Heart left ventricle (tissue), 16 donors: ENCODE measurements at regions of chr6 and their contacts with region 1.

Region 1: DNA sequence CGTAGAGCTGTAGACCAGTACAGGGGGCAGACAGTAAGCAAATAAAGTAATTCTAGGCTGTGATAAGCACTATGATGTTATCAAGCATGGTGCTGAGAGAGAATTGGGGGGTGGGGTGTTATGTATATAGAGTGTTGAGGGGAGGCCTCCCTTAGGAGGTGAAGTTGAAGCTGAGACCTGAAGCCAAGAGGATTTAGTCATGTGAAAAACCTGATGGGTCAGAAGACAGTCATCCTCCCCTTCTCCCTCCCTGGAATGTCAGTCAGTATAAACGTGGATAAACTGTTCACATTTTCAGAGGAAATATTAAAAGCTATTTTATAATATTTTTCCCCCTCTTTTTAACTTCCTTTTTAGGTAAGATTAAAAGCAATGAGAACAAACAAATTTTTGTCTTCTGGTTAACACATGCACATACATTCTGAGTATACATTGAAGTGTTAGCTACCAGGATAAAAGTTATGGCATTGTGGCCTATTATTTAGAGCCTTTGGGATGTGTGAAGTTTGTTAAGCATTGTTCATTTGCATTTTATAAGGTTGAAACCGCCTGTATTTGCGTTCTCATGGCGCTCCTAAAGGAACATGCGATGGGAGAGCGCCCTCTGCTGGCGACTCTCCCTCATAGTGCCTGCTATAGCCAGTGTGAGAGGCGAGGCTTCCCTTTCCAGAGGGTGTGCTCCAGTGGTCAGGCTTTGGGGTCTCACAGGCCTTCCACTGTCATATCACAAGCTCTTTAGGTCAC is 35.4 kb upstream of the MAPK13 start:
- DNase-seq: peak; percentile 66 to 91 (median 82)
- ATAC-seq: peak; percentile 89 to 95 (median 92)
- H3K4me3 ChIP-seq: no peak overlapping the region
- H3K27ac ChIP-seq: peak overlapping the region in 5 of 12 donors; percentile 3 to 51 (median 24)
- H3K4me1 ChIP-seq: peaks cover 0 to 25% (median 13%) of the 10 kb centered on the region in 12 donors
- H3K27me3 ChIP-seq: no peaks in the 10 kb centered on the region
- CTCF ChIP-seq: peak; percentile 93 to 98 (median 97)
- POLR2A ChIP-seq: no peak

Region 2: GRCh38 chr6:35757456-35758123 is 337.3 kb before region 1 on chr6:
- intact Hi-C with region 1: loop called in 3 of 10 experiments (anchors 10 kb)
- DNase-seq: no peak
- ATAC-seq: peak in 1 of 4 donors; percentile 18
- H3K4me3 ChIP-seq: no peak overlapping the region
- H3K27ac ChIP-seq: no peak overlapping the region
- H3K4me1 ChIP-seq: no peaks in the 10 kb centered on the region
- H3K27me3 ChIP-seq: peaks cover 0 to 39% (median 12%) of the 10 kb centered on the region in 9 donors
- CTCF ChIP-seq: peak in 5 of 12 donors; percentile 7 to 43 (median 33)
- POLR2A ChIP-seq: no peak

Region 3: GRCh38 chr6:36027501-36028087 is 67.3 kb before region 1 on chr6 and contains the start of gene MAPK14:
- intact Hi-C with region 1: loop called (anchors 1 to 2 kb)
- DNase-seq: peak; percentile 99 to 100 (median 99)
- ATAC-seq: peak; percentile 94 to 98 (median 97)
- H3K4me3 ChIP-seq: peak within 1 kb of the TSS; percentile 69 to 100 (median 92)
- H3K27ac ChIP-seq: peak within 1 kb of the TSS; percentile 83 to 96 (median 92)
- H3K4me1 ChIP-seq: peaks cover 0 to 46% (median 20%) of the 10 kb centered on the region in 12 donors
- H3K27me3 ChIP-seq: peaks cover 4 to 16% (median 7%) of the 10 kb centered on the region in 9 donors
- CTCF ChIP-seq: peak; percentile 85 to 97 (median 90)
- POLR2A ChIP-seq: peak; percentile 78 to 99
- total RNA-seq, gene MAPK14: 24.3 to 46.5 (median 34.9) TPM

Region 4: GRCh38 chr6:36073587-36073986 is 21.3 kb before region 1 on chr6:
- intact Hi-C with region 1: loop called in 1 of 10 experiments (anchors 2 kb)
- DNase-seq: no peak
- ATAC-seq: no peak
- H3K4me3 ChIP-seq: no peak overlapping the region
- H3K27ac ChIP-seq: no peak overlapping the region
- H3K4me1 ChIP-seq: peaks cover 0 to 18% (median 5%) of the 10 kb centered on the region in 12 donors
- H3K27me3 ChIP-seq: no peaks in the 10 kb centered on the region
- CTCF ChIP-seq: no peak
- POLR2A ChIP-seq: no peak